ENCODE measurements at regions of chr4 and their contacts with region 1.

Region 1: GRCh38 chr4:76658231-76659102 is 223.4 kb downstream of the SHROOM3 start:
- DNase-seq: no peak
- H3K4me3 ChIP-seq: no peak overlapping the region
- H3K27ac ChIP-seq: peak overlapping the region; percentile 56 to 72
- H3K4me1 ChIP-seq: peaks cover 0 to 58% (median 41%) of the 10 kb centered on the region in 4 donors
- H3K27me3 ChIP-seq: no peaks in the 10 kb centered on the region
- CTCF ChIP-seq: no peak

Region 2: DNA sequence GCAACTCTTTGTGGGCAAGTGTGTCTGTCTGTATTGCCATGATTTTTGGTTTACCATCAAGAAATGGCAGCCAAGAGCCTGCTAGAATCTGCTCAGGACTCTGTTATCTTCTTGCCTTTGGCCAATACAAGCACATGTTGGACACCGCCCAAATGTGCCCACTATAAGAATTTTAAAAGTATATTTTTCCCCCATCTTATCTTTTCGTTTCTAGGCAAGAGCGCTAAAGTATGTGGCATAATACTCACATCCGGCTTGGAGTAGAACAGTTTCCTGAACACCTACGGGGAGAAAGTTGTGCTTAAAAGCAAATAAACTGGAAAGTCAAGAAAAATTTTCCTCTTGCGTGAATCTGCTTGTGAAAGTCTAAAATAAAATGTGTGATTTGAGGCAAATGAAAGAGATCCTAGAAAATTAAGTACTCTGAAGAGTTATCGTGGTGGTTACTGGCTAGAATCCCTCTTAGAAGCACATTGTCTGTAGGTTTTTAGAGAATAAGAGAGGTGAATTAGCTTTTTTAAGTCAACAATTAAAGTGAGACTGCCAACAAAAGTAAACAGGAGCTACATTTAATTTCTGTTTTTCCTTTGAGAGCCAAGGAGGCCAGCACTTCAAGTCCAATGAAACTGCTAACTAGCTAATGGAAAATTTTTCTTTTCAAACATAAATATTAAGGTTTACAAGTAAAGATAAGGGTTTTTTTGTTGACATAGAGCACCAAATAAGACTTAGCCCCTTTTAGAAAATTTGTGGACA is 19.3 kb after region 1 on chr4:
- intact Hi-C with region 1: loop called (anchors 2 kb)
- DNase-seq: no peak
- H3K4me3 ChIP-seq: no peak overlapping the region
- H3K27ac ChIP-seq: peak overlapping the region; percentile 72
- H3K4me1 ChIP-seq: peaks cover 0 to 54% (median 25%) of the 10 kb centered on the region in 4 donors
- H3K27me3 ChIP-seq: no peaks in the 10 kb centered on the region
- CTCF ChIP-seq: no peak

Region 3: DNA sequence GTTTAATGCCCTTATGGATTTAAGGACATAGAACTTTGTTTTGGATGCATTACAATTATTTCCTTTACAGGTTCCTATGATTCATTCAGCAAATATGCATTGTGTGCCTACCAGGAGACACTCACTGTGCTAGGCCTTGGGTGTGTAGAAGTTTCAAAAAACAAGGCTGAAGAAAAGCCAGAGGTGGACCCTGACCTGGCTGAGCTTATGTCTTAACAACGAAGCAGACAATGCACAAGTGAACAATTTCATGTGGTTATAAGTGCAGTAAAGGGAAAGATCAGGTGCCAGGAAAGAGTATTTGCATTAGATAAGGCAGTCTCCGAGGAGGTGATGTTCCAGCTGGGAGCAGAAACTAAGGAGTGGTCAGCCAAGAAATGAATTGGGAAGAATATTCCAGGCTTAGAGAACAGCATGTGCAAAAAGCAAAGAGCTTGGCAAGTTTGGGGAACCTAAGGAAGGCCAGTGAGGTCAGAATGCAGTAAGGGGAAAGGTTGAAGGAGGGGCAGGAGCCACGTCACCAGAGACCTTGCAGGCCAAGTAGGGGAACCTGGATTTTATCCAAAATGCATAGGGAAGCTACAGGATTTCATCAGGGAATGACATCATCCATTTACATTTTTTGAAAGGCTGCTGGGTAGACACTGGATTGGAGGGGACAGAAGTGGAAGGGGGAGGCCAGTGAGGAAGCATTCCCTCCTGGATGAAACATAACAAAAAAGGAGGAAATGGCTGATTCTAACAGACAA is 45.8 kb after region 1 on chr4:
- intact Hi-C with region 1: no loop called
- DNase-seq: no peak
- H3K4me3 ChIP-seq: no peak overlapping the region
- H3K27ac ChIP-seq: peak overlapping the region; percentile 62 to 68
- H3K4me1 ChIP-seq: peaks cover 0 to 94% (median 44%) of the 10 kb centered on the region in 4 donors
- H3K27me3 ChIP-seq: no peaks in the 10 kb centered on the region
- CTCF ChIP-seq: no peak

Measured in tibial artery (tissue), 4 donors.